PC-9 (cell line): ENCODE measurements at regions of chr12 and their contacts with region 1.

Region 1: GRCh38 chr12:120356567-120357030 is 12.4 kb downstream of the MSI1 start:
- DNase-seq: peak; percentile 92 to 94
- H3K4me3 ChIP-seq: peak overlapping the region; percentile 22; the same call in 1 of the 2 replicates
- H3K27ac ChIP-seq: no peak overlapping the region
- H3K4me1 ChIP-seq: peaks cover 5% of the 10 kb centered on the region; the same call in 1 of the 2 replicates
- H3K27me3 ChIP-seq: no peaks in the 10 kb centered on the region
- CTCF ChIP-seq: peak; percentile 89

Region 2: GRCh38 chr12:120121766-120122293 is 234.8 kb before region 1 on chr12:
- CTCF ChIA-PET with region 1: no interaction called
- POLR2A ChIA-PET with region 1: no interaction called
- intact Hi-C with region 1: no loop called
- DNase-seq: no peak
- H3K4me3 ChIP-seq: no peak overlapping the region
- H3K27ac ChIP-seq: no peak overlapping the region
- H3K4me1 ChIP-seq: peaks cover 28% of the 10 kb centered on the region
- H3K27me3 ChIP-seq: no peaks in the 10 kb centered on the region
- CTCF ChIP-seq: no peak

Region 3: DNA sequence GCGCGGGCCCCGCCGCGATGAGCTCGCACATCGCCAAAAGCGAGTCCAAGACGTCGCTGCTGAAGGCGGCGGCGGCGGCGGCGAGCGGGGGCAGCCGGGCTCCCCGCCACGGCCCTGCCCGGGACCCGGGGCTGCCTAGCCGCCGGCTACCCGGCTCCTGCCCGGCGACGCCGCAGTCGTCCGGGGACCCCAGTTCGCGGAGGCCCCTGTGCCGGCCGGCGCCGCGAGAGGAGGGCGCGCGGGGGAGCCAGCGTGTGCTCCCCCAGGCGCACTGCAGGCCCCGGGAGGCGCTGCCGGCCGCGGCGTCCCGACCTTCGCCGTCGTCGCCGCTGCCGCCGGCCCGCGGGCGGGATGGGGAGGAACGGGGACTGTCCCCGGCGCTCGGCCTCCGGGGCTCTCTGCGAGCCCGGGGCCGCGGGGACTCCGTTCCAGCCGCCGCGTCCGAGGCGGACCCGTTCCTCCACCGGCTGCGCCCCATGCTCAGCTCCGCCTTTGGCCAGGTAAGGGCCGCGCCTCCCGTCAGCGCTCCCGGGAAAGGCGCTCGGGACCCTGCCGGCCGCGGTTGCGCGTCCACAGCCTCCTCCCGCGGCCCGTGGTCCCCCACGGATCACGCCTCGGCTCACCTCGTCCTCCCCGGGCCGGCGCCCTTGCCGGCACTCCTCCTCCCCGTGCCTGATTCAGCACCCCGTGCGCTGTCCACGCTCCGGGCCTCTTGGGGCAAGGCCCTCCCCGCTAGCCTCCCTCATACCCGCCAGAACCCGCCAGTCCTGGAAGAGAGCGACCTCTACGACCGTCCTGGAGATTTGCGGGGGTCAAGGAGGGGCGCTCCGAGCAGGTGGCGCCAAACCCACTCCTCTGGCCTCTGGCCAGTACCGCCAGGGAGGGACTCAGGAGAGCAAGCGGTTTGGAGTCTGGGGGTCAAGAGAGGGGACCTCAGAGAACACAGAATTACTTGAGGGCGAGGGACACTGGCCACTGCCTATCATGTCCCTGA is 284.5 kb after region 1 on chr12:
- CTCF ChIA-PET with region 1: interaction called, 4 read pairs
- POLR2A ChIA-PET with region 1: no interaction called
- intact Hi-C with region 1: loop called (anchors 10 kb)
- DNase-seq: peak; percentile 44 to 57
- H3K4me3 ChIP-seq: peak overlapping the region; percentile 54; the same call in 1 of the 2 replicates
- H3K27ac ChIP-seq: no peak overlapping the region
- H3K4me1 ChIP-seq: peaks cover 5% of the 10 kb centered on the region
- H3K27me3 ChIP-seq: peaks cover 27% of the 10 kb centered on the region
- CTCF ChIP-seq: no peak